SK-N-SH (cell line): ENCODE measurements at regions of chr1 and their contacts with region 1.

Region 1: DNA sequence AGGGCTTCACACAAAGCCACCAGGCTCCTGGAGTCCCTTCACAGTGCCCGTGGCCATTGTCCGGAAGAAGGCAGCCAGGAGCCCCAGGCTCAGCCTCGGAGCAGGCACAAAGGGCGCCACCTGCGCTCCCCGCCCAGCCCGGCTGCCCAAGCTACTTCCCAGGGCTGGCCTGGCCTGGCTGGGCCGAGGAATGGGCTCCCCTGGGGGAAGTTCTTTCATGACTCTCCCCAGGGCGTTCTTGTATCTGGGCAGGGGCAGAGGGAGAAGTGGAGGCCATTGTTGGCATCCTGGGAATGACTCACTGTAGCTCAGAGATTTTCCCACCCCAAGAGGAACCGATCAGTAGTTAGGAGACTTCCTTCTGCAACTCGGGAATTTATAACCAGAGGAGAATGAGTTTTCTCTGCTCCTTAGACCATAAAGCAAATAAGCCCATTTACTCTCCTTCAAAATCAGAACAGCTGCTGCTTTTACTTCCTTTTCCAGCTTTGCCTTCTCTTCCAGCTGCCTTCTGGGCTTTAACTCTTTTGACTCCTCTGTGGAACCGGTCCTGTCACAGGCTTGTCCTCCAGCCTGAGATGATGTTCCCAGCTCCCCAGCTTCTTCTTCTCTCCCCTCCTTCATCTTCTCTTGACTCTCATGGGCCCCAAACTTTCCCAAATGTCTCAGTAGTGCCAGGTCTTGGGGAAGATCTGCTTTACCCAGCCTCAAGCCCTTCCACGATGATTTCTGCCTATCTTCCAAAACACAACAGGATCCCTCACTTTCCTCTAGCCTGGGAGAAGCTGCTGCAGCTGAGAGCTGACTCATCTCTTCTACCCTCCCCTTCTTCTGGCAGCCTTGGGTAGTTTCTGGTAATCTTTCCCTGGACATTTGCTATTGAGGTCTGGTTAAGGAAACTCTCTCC is 118.7 kb upstream of the CD34 start:
- DNase-seq: no peak
- H3K4me3 ChIP-seq: no peak overlapping the region
- H3K27ac ChIP-seq: peak overlapping the region in 1 of 2 experiments; percentile 90; a peak in 2 of 4 replicates
- H3K4me1 ChIP-seq: peaks cover 6 to 19% of the 10 kb centered on the region in 2 experiments; a peak in 3 of 4 replicates
- H3K27me3 ChIP-seq: no peaks in the 10 kb centered on the region
- CTCF ChIP-seq: no peak
- EP300 ChIP-seq: no peak; a peak in 1 of 4 replicates
- RAD21 ChIP-seq: no peak

Region 2: GRCh38 chr1:208013210-208013609 is 16.4 kb before region 1 on chr1:
- CTCF ChIA-PET with region 1: interaction called, 35 read pairs
- POLR2A ChIA-PET with region 1: no interaction called
- DNase-seq: peak; percentile 76
- H3K4me3 ChIP-seq: no peak overlapping the region
- H3K27ac ChIP-seq: peak overlapping the region in 1 of 2 experiments; percentile 43; a peak in 1 of 4 replicates
- H3K4me1 ChIP-seq: peaks cover 4 to 24% of the 10 kb centered on the region in 2 experiments; a peak in 2 of 4 replicates
- H3K27me3 ChIP-seq: no peaks in the 10 kb centered on the region
- CTCF ChIP-seq: no peak
- EP300 ChIP-seq: peak in 1 of 2 experiments; percentile 53; a peak in 2 of 4 replicates
- RAD21 ChIP-seq: peak; percentile 12; the same call in 1 of the 2 replicates

Region 3: DNA sequence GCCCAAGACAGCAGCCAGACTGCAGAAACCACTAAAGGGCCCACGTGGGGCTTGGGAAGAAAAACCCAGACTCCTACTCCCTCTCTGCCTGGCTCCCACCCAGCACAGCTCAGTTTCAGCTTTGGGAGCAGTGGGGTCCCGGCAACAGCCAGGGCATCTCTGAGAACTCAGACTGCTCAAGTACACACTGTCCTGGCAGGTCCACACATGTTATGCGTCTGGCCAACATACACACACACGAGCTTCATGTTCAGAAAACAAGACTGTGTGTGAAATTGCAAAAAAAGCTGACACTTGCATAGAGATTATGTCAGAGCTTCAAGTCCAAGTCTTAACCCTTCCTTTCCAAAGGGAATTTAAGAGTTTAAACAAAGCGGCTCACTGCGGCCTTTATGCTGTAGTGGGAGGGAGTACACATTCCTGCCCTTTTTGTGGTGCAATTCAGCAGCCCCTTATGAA is 17.9 kb after region 1 on chr1:
- CTCF ChIA-PET with region 1: interaction called, 56 read pairs
- POLR2A ChIA-PET with region 1: no interaction called
- DNase-seq: no peak
- H3K4me3 ChIP-seq: no peak overlapping the region
- H3K27ac ChIP-seq: no peak overlapping the region
- H3K4me1 ChIP-seq: peaks cover 0 to 5% of the 10 kb centered on the region in 2 experiments; a peak in 1 of 4 replicates
- H3K27me3 ChIP-seq: no peaks in the 10 kb centered on the region
- CTCF ChIP-seq: no peak
- EP300 ChIP-seq: no peak
- RAD21 ChIP-seq: no peak

Region 4: GRCh38 chr1:208065862-208066261 is 36.2 kb after region 1 on chr1:
- CTCF ChIA-PET with region 1: interaction called, 99 read pairs
- POLR2A ChIA-PET with region 1: no interaction called
- DNase-seq: no peak
- H3K4me3 ChIP-seq: no peak overlapping the region
- H3K27ac ChIP-seq: no peak overlapping the region
- H3K4me1 ChIP-seq: peaks cover 0 to 19% of the 10 kb centered on the region in 2 experiments; a peak in 2 of 4 replicates
- H3K27me3 ChIP-seq: no peaks in the 10 kb centered on the region
- CTCF ChIP-seq: no peak
- EP300 ChIP-seq: no peak
- RAD21 ChIP-seq: no peak

Region 5: DNA sequence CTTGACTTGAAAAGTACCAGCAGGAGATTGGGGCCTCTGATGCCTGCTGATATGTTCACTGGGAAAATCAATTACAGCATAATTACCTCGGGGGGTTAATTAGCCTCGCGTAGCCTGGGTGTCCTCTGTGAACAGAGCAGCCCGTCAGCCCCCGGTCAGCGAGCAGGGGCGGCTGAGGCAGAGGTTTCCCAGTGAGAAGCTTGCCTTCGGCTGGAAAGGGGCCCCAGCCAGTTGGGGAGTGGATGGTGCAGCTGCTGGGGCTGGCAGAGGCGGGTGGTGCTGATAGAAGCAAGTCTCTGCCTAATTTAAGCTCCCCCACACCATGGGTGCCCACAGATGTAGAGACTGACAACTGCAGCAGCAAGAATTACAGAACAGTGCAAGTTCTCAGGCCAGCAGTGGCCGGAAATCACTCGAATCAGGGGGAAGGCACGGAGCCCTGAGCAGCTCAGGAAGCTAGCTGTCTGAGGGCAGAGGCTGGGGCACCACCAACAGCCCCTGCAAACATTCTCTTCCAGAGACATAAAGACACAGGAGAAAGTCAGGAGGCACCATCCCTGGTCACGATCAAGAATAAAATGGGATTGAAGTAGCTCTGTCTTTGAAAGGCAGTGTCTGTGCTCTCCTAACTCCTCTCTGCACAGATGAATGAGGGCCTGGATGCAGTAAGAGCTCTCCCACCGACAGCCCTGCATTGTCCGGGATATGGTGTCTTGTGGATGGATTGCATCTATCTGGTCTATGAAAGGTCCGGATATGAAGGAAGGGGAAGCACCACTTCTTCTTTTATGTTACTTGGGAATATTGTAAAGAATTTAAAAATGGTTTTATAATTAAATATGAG is 47.8 kb after region 1 on chr1:
- CTCF ChIA-PET with region 1: no interaction called
- POLR2A ChIA-PET with region 1: no interaction called
- DNase-seq: peak; percentile 73
- H3K4me3 ChIP-seq: no peak overlapping the region; a peak in 1 of 4 replicates
- H3K27ac ChIP-seq: peak overlapping the region in 1 of 2 experiments; percentile 82; a peak in 2 of 4 replicates
- H3K4me1 ChIP-seq: peaks cover 0 to 20% of the 10 kb centered on the region in 2 experiments; a peak in 2 of 4 replicates
- H3K27me3 ChIP-seq: no peaks in the 10 kb centered on the region
- CTCF ChIP-seq: no peak
- EP300 ChIP-seq: peak in 1 of 2 experiments; percentile 71; a peak in 2 of 4 replicates
- RAD21 ChIP-seq: peak; percentile 7; the same call in 1 of the 2 replicates